ENCODE measurements at regions of chr18 and their contacts with region 1.

Region 1: GRCh38 chr18:58043491-58044379 is at the start of gene NEDD4L:
- DNase-seq: peak in 1 of 2 experiments; percentile 87
- H3K4me3 ChIP-seq: peak within 1 kb of the TSS; percentile 73 to 99 (median 84)
- H3K27ac ChIP-seq: peak within 1 kb of the TSS; percentile 53; the same call in 1 of the 2 replicates
- H3K4me1 ChIP-seq: peaks cover 3 to 7% (median 5%) of the 10 kb centered on the region in 4 experiments; a peak in 5 of 7 replicates
- H3K27me3 ChIP-seq: no peaks in the 10 kb centered on the region; a peak in 1 of 7 replicates
- CTCF ChIP-seq: peak; percentile 74 to 90 (median 90)
- EP300 ChIP-seq: no peak
- POLR2A ChIP-seq: no peak
- RAD21 ChIP-seq: peak; percentile 91 to 93
- total RNA-seq, gene NEDD4L: 63.4 and 69.8 TPM in 2 replicates

Region 2: DNA sequence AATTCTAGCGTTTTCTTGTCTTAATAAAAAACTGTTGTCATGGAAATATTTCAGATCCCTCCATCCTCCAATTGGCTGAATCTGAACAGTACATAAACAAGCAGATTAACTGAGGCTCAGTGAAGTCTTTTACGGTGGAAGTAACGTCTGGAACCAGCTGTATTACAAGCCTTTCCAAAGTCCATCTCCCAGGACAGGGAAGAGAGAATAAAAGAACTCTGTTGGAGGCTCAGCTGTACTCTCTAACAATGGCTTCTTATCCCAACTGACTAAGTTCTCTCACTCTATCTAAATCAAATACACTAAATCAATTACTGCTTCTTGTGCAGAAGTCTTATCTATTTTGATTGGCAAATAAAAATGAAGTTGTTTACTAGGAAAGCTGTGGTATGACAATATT is 19.6 kb before region 1 on chr18:
- CTCF ChIA-PET with region 1: interaction called, 11 read pairs
- POLR2A ChIA-PET with region 1: no interaction called
- DNase-seq: no peak
- H3K4me3 ChIP-seq: no peak overlapping the region
- H3K27ac ChIP-seq: no peak overlapping the region
- H3K4me1 ChIP-seq: peaks cover 0 to 5% (median 3%) of the 10 kb centered on the region in 4 experiments; a peak in 4 of 7 replicates
- H3K27me3 ChIP-seq: no peaks in the 10 kb centered on the region; a peak in 1 of 7 replicates
- CTCF ChIP-seq: no peak
- EP300 ChIP-seq: no peak
- POLR2A ChIP-seq: no peak
- RAD21 ChIP-seq: no peak

Region 3: DNA sequence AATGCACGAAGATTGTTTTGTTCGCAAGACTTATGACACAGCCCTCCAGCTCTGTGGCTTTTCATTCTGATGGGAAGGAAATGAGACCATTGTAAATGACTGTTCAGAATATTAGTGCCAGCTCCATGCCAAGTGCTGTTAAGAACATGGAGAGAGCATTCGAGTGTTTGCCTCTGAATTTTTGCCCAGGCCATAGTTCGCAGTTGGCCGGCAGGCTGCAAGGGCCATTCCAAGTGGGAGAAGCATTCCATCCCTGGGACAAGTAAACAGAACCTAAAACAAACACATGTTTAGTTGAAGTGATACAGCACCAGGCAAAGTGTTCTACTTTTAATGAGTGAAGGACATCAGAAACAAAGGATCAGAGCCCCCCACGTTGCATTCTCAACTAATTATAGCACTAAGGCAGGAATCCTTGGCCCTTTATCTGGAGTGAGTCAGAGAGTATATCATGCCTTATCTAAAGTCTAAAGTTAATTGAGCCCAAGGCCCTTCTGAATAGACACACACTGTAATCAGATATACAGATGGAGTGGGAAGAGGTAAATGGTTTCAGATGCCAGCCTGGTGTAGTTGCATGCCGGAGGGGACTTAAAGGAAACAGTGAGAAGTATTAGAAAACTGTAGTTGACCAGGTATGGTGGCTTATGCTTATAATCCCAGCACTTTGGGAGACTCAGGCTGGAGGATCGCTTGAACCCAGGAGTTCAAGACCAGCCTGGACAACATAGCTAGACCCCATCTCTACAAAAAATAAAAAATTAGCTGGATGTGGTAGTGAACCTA is 53.6 kb after region 1 on chr18:
- CTCF ChIA-PET with region 1: interaction called, 10 read pairs
- POLR2A ChIA-PET with region 1: interaction called, 10 read pairs
- DNase-seq: no peak
- H3K4me3 ChIP-seq: no peak overlapping the region
- H3K27ac ChIP-seq: no peak overlapping the region
- H3K4me1 ChIP-seq: peaks cover 3 to 36% (median 25%) of the 10 kb centered on the region in 4 experiments
- H3K27me3 ChIP-seq: no peaks in the 10 kb centered on the region
- CTCF ChIP-seq: no peak
- EP300 ChIP-seq: no peak
- POLR2A ChIP-seq: no peak
- RAD21 ChIP-seq: no peak

Region 4: DNA sequence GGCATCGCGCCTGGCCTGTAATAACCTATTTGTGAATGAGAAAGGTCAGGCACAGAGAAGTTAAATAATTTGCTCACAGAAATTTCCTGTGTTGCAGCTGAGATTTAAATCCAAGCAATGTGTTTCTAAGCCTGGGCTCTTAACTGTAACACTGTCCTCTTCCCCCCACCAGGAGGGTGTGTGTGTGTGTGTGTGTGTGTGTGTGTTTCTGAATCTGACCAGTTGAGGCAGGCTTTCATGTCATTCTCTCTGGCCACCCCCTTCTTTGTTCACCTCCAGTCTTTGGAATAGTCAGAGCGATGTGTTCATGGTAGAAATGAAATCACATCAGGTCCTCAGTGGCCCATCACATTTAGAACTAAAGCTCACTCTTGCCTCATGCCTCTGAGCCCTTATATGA is 81.4 kb after region 1 on chr18:
- CTCF ChIA-PET with region 1: interaction called, 63 read pairs
- POLR2A ChIA-PET with region 1: interaction called, 5 read pairs
- DNase-seq: peak in 1 of 2 experiments; percentile 45
- H3K4me3 ChIP-seq: no peak overlapping the region
- H3K27ac ChIP-seq: no peak overlapping the region
- H3K4me1 ChIP-seq: no peaks in the 10 kb centered on the region
- H3K27me3 ChIP-seq: no peaks in the 10 kb centered on the region
- CTCF ChIP-seq: peak in 1 of 3 experiments; percentile 51; a peak in 2 of 4 replicates
- EP300 ChIP-seq: no peak
- POLR2A ChIP-seq: no peak
- RAD21 ChIP-seq: no peak; a peak in 1 of 4 replicates

Region 5: GRCh38 chr18:58180738-58181353 is 137.1 kb after region 1 on chr18:
- CTCF ChIA-PET with region 1: interaction called, 24 read pairs
- POLR2A ChIA-PET with region 1: interaction called, 4 read pairs
- DNase-seq: peak in 1 of 2 experiments; percentile 82
- H3K4me3 ChIP-seq: no peak overlapping the region
- H3K27ac ChIP-seq: no peak overlapping the region
- H3K4me1 ChIP-seq: peaks cover 0 to 17% (median 7%) of the 10 kb centered on the region in 4 experiments; a peak in 4 of 7 replicates
- H3K27me3 ChIP-seq: no peaks in the 10 kb centered on the region
- CTCF ChIP-seq: peak in 2 of 3 experiments; percentile 76 to 87; a peak in 3 of 4 replicates
- EP300 ChIP-seq: no peak
- POLR2A ChIP-seq: no peak
- RAD21 ChIP-seq: peak; percentile 74 to 83

Measured in H1 (cell line).